CD4-positive, alpha-beta memory T cell (primary cell): ENCODE measurements at regions of chr15 and their contacts with region 1.

Region 1: GRCh38 chr15:45118131-45118588 is 4.0 kb downstream of the DUOXA2 start:
- DNase-seq: peak; percentile 77 to 84 (median 79)
- H3K4me3 ChIP-seq: no peak overlapping the region
- H3K4me3 Mint-ChIP-seq: peak overlapping the region; percentile 67 to 94 (median 86)
- H3K27ac ChIP-seq: no peak overlapping the region
- H3K27ac Mint-ChIP-seq: peak overlapping the region in 1 of 7 donors; percentile 62
- H3K4me1 ChIP-seq: peaks cover 32% of the 10 kb centered on the region
- H3K4me1 Mint-ChIP-seq: peaks cover 20 to 48% (median 36%) of the 10 kb centered on the region in 4 donors
- H3K27me3 ChIP-seq: peaks cover 44% of the 10 kb centered on the region
- H3K27me3 Mint-ChIP-seq: peaks cover 52 to 61% of the 10 kb centered on the region in 2 donors

Region 2: DNA sequence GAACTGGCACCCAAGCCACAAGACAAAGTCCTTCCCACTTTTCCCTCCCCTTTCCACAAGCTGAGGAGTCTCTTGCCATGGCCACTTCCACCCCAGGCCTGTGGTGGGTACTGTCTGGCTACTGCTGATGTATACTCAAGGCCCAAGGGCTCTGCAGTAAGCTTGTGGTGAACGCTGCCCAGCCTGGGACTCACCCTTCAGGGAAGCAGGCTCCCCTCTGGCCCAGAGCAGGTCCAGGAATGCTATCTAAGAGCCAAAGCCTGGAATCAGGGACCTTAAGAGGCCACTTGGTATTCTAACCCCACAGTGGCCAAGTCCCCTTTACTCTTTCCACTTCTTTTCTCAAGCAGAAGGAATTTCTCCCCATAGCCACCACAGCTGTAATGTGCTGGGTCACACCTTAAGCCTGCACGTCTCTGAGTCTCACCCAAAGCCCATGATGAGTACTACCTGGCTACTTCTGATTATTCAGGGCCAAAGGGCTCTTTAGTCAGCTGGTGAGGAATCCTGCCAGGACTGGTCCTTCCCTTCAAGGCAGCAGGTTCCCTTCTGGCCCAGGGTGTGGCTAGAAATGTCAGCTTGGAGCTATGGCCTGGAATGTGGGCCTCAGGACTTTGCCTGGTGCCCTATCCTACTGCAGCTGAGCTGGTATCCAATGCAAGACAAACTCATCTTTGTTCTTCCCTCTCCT is 411.1 kb before region 1 on chr15:
- CTCF ChIA-PET with region 1: no interaction called
- POLR2A ChIA-PET with region 1: no interaction called
- intact Hi-C with region 1: no loop called
- DNase-seq: no peak
- H3K4me3 ChIP-seq: no peak overlapping the region
- H3K4me3 Mint-ChIP-seq: no peak overlapping the region
- H3K27ac ChIP-seq: no peak overlapping the region
- H3K27ac Mint-ChIP-seq: peak overlapping the region in 2 of 7 donors; percentile 37 to 51
- H3K4me1 ChIP-seq: peaks cover 20% of the 10 kb centered on the region
- H3K4me1 Mint-ChIP-seq: peaks cover 17 to 44% (median 31%) of the 10 kb centered on the region in 4 donors
- H3K27me3 ChIP-seq: no peaks in the 10 kb centered on the region
- H3K27me3 Mint-ChIP-seq: no peaks in the 10 kb centered on the region

Region 3: GRCh38 chr15:45037936-45038335 is 80.2 kb before region 1 on chr15:
- CTCF ChIA-PET with region 1: interaction called, 4 read pairs
- POLR2A ChIA-PET with region 1: no interaction called
- intact Hi-C with region 1: loop called (anchors 2 kb)
- DNase-seq: no peak
- H3K4me3 ChIP-seq: no peak overlapping the region
- H3K4me3 Mint-ChIP-seq: peak overlapping the region in 1 of 8 donors; percentile 26
- H3K27ac ChIP-seq: no peak overlapping the region
- H3K27ac Mint-ChIP-seq: peak overlapping the region in 1 of 7 donors; percentile 4
- H3K4me1 ChIP-seq: peaks cover 5% of the 10 kb centered on the region
- H3K4me1 Mint-ChIP-seq: peaks cover 5 to 19% (median 11%) of the 10 kb centered on the region in 4 donors
- H3K27me3 ChIP-seq: no peaks in the 10 kb centered on the region
- H3K27me3 Mint-ChIP-seq: no peaks in the 10 kb centered on the region

Region 4: GRCh38 chr15:45106002-45106790 is 12.0 kb before region 1 on chr15:
- CTCF ChIA-PET with region 1: interaction called, 12 read pairs
- POLR2A ChIA-PET with region 1: no interaction called
- intact Hi-C with region 1: no loop called
- DNase-seq: no peak
- H3K4me3 ChIP-seq: no peak overlapping the region
- H3K4me3 Mint-ChIP-seq: no peak overlapping the region
- H3K27ac ChIP-seq: no peak overlapping the region
- H3K27ac Mint-ChIP-seq: no peak overlapping the region
- H3K4me1 ChIP-seq: no peaks in the 10 kb centered on the region
- H3K4me1 Mint-ChIP-seq: no peaks in the 10 kb centered on the region
- H3K27me3 ChIP-seq: peaks cover 10% of the 10 kb centered on the region
- H3K27me3 Mint-ChIP-seq: peaks cover 23 to 37% of the 10 kb centered on the region in 2 donors

Region 5: DNA sequence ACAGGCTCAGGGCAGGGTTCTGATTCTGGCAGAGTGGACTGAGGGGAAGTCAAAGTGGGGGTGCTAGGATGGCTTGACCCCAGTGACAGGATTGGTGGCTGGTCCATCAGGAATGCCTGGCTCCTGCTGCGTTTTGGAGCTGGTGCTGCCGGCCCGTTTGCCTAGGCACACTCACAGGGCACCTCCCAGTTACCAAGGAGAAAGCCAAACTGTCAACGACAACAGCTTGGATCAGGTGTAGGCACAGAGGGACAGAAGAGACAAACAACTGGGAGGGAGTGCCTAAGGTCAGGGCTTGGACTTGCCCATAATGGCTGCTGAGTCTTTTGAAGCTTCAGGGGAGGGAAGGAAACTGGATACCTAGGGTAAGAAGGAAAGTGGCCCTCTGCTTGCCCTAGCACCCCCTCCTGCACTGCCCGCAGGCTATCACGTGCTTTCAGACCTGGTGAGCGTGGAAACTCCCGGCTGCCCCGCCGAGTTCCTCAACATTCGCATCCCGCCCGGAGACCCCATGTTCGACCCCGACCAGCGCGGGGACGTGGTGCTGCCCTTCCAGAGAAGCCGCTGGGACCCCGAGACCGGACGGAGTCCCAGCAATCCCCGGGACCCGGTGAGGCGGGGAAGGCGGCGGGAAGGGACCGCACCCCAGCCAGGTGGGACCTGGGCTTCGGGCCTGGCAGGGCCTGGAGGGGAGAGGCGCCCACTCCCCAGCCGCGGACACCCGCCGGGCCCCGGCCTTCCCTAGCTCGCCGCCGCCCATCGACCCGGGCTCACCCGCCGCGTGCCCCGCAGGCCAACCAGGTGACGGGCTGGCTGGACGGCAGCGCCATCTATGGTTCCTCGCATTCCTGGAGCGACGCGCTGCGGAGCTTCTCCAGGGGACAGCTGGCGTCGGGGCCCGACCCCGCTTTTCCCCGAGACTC is 16.8 kb after region 1 on chr15:
- CTCF ChIA-PET with region 1: interaction called, 19 read pairs
- POLR2A ChIA-PET with region 1: interaction called, 3 read pairs
- intact Hi-C with region 1: no loop called
- DNase-seq: no peak
- H3K4me3 ChIP-seq: no peak overlapping the region
- H3K4me3 Mint-ChIP-seq: peak overlapping the region; percentile 64 to 84 (median 72)
- H3K27ac ChIP-seq: no peak overlapping the region
- H3K27ac Mint-ChIP-seq: no peak overlapping the region
- H3K4me1 ChIP-seq: peaks cover 11% of the 10 kb centered on the region
- H3K4me1 Mint-ChIP-seq: peaks cover 4 to 25% (median 11%) of the 10 kb centered on the region in 4 donors
- H3K27me3 ChIP-seq: peaks cover 25% of the 10 kb centered on the region
- H3K27me3 Mint-ChIP-seq: peaks cover 30 to 35% of the 10 kb centered on the region in 2 donors

Region 6: GRCh38 chr15:45140557-45141250 is 22.5 kb after region 1 on chr15:
- CTCF ChIA-PET with region 1: interaction called, 12 read pairs
- POLR2A ChIA-PET with region 1: no interaction called
- intact Hi-C with region 1: no loop called
- DNase-seq: no peak
- H3K4me3 ChIP-seq: no peak overlapping the region
- H3K4me3 Mint-ChIP-seq: no peak overlapping the region
- H3K27ac ChIP-seq: no peak overlapping the region
- H3K27ac Mint-ChIP-seq: no peak overlapping the region
- H3K4me1 ChIP-seq: peaks cover 7% of the 10 kb centered on the region
- H3K4me1 Mint-ChIP-seq: peaks cover 4 to 9% (median 6%) of the 10 kb centered on the region in 4 donors
- H3K27me3 ChIP-seq: peaks cover 5% of the 10 kb centered on the region
- H3K27me3 Mint-ChIP-seq: peaks cover 8 to 11% of the 10 kb centered on the region in 2 donors

Region 7: GRCh38 chr15:45187894-45188830 is 70.0 kb after region 1 on chr15 and contains the start of gene SHF:
- CTCF ChIA-PET with region 1: no interaction called
- POLR2A ChIA-PET with region 1: no interaction called
- intact Hi-C with region 1: loop called (anchors 5 kb)
- DNase-seq: peak; percentile 49 to 78 (median 56)
- H3K4me3 ChIP-seq: peak within 1 kb of the TSS; percentile 67 to 90
- H3K4me3 Mint-ChIP-seq: peak within 1 kb of the TSS; percentile 86 to 97 (median 93)
- H3K27ac ChIP-seq: peak within 1 kb of the TSS; percentile 66
- H3K27ac Mint-ChIP-seq: peak within 1 kb of the TSS; percentile 77 to 95 (median 94)
- H3K4me1 ChIP-seq: peaks cover 7% of the 10 kb centered on the region
- H3K4me1 Mint-ChIP-seq: peaks cover 9 to 23% (median 13%) of the 10 kb centered on the region in 4 donors
- H3K27me3 ChIP-seq: no peaks in the 10 kb centered on the region
- H3K27me3 Mint-ChIP-seq: no peaks in the 10 kb centered on the region
- total RNA-seq, gene SHF: 5.3 to 6.7 TPM